ENCODE measurements at regions of chr17 and their contacts with region 1.

Region 1: GRCh38 chr17:63848834-63849700 is 6.6 kb upstream of the SMARCD2 start:
- DNase-seq: peak; percentile 88 to 96 (median 94)
- ATAC-seq: peak; percentile 99
- H3K4me3 ChIP-seq: peak overlapping the region; percentile 57
- H3K4me3 Mint-ChIP-seq: peak overlapping the region; percentile 81 to 90 (median 87)
- H3K27ac ChIP-seq: peak overlapping the region; percentile 61
- H3K27ac Mint-ChIP-seq: peak overlapping the region; percentile 86 to 99 (median 93)
- H3K4me1 ChIP-seq: peaks cover 0 to 9% of the 10 kb centered on the region in 2 donors
- H3K4me1 Mint-ChIP-seq: peaks cover 11 to 27% (median 24%) of the 10 kb centered on the region in 7 donors
- H3K27me3 ChIP-seq: no peaks in the 10 kb centered on the region
- H3K27me3 Mint-ChIP-seq: peaks cover 0 to 25% (median 0%) of the 10 kb centered on the region in 5 donors

Region 2: DNA sequence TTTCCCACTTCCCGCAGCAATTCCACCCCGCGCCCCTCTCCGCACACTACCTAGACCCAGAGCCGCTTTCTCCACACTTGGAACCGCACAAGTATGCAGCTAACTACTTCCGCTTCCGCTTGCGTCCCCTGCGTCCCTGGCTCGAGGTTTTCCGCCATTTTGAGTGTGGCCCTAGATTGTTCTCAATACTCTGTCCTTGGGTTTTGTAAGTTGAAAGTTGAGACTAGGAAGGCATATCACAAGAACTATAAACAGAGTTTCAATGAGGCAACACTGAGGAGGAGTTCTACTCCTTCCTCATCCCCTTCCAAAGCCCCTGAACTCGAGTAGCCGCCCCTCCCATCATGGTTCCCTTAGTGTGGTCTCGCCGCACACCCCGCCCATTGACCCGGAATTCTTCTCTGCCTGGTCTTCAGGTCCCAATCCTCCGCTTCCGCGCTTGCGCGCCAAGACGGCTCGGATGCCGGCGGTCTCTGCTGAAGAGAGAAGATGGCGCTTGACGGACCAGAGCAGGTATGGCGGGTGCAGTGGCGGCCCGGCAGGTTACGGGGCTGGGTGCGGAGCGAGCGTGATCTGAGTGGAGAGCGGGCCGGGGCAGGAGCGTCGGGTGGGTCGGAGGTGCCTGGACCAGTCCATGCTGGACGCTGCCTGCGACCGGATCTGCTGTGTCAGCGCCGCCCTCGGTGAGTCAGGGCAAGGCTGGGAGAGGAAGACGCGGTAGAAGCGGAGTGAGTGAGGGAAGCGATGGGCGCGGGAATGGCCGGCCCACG is 21.9 kb before region 1 on chr17 and contains the starts of genes FTSJ3 and PSMC5:
- CTCF ChIA-PET with region 1: interaction called, 5 read pairs
- POLR2A ChIA-PET with region 1: interaction called, 204 read pairs
- intact Hi-C with region 1: loop called in 1 of 2 experiments (anchors 1 kb)
- DNase-seq: peak; percentile 89 to 98 (median 96)
- ATAC-seq: peak; percentile 97
- H3K4me3 ChIP-seq: peak within 1 kb of the TSS; percentile 89
- H3K4me3 Mint-ChIP-seq: peak within 1 kb of the TSS; percentile 93 to 100 (median 98)
- H3K27ac ChIP-seq: peak within 1 kb of the TSS; percentile 87
- H3K27ac Mint-ChIP-seq: peak within 1 kb of the TSS; percentile 98 to 100 (median 99)
- H3K4me1 ChIP-seq: peaks cover 27 to 46% of the 10 kb centered on the region in 2 donors
- H3K4me1 Mint-ChIP-seq: peaks cover 43 to 82% (median 77%) of the 10 kb centered on the region in 7 donors
- H3K27me3 ChIP-seq: no peaks in the 10 kb centered on the region
- H3K27me3 Mint-ChIP-seq: no peaks in the 10 kb centered on the region
- total RNA-seq, gene FTSJ3: 38.1 to 66.2 (median 55.8) TPM
- total RNA-seq, gene PSMC5: 68.4 to 153 (median 105) TPM

Region 3: GRCh38 chr17:63859257-63859656 is 10.2 kb after region 1 on chr17:
- CTCF ChIA-PET with region 1: interaction called, 17 read pairs
- POLR2A ChIA-PET with region 1: interaction called, 5 read pairs
- intact Hi-C with region 1: no loop called
- DNase-seq: no peak
- ATAC-seq: no peak
- H3K4me3 ChIP-seq: no peak overlapping the region
- H3K4me3 Mint-ChIP-seq: no peak overlapping the region
- H3K27ac ChIP-seq: no peak overlapping the region
- H3K27ac Mint-ChIP-seq: no peak overlapping the region
- H3K4me1 ChIP-seq: no peaks in the 10 kb centered on the region
- H3K4me1 Mint-ChIP-seq: no peaks in the 10 kb centered on the region
- H3K27me3 ChIP-seq: no peaks in the 10 kb centered on the region
- H3K27me3 Mint-ChIP-seq: peaks cover 0 to 38% (median 0%) of the 10 kb centered on the region in 5 donors

Region 4: DNA sequence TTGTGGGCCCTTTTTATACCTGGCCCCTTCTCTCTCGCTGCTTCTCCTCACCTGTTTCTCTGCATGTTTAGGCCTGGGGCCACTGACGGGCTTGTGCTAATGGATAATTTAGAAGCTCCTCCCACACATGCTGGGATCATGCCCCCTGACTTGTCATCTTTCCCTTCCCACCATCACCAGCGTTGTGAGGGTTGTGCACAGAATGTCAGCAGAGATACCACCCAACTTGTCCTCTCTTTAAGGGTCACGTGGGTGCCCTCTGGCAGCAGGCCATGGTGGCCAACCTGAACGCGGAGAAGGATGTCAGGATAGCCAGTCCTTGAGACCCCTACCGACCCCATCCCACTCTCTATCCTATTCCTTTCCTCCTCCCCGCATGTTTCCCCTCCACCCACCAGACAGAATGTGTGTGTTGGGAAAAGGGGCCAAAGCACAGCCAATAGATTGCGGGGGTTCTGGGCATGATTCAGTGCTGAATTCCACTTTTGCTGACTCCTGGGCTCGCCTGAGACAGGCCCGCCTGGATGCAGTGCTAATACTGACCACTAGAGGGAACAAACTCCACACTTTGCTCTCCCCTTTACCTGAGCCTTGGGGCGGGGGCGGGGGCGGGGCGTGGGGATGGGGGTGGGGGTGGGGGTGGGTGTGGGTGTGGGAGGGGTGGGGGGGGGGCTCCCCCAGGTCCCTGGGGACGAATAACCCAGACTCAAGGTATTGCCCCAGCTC is 33.0 kb after region 1 on chr17 and contains the start of gene GH2:
- CTCF ChIA-PET with region 1: no interaction called
- POLR2A ChIA-PET with region 1: no interaction called
- intact Hi-C with region 1: no loop called
- DNase-seq: peak in 8 of 9 donors; percentile 32 to 69 (median 52)
- ATAC-seq: peak; percentile 94
- H3K4me3 ChIP-seq: no peak within 1 kb of the TSS
- H3K4me3 Mint-ChIP-seq: no peak within 1 kb of the TSS
- H3K27ac ChIP-seq: no peak within 1 kb of the TSS
- H3K27ac Mint-ChIP-seq: no peak within 1 kb of the TSS
- H3K4me1 ChIP-seq: no peaks in the 10 kb centered on the region
- H3K4me1 Mint-ChIP-seq: peaks cover 0 to 2% (median 0%) of the 10 kb centered on the region in 7 donors
- H3K27me3 ChIP-seq: no peaks in the 10 kb centered on the region
- H3K27me3 Mint-ChIP-seq: peaks cover 0 to 3% (median 0%) of the 10 kb centered on the region in 5 donors
- total RNA-seq, gene GH2: not detected

Measured in naive thymus-derived CD4-positive, alpha-beta T cell (primary cell).